ENCODE measurements at regions of chr19 and their contacts with region 1.

Region 1: GRCh38 chr19:19643158-19644053 is at the start of gene GMIP:
- DNase-seq: peak; percentile 68 to 78
- H3K4me3 ChIP-seq: peak within 1 kb of the TSS; percentile 60 to 76
- H3K27ac ChIP-seq: peak within 1 kb of the TSS; percentile 53 to 55
- H3K4me1 ChIP-seq: no peaks in the 10 kb centered on the region
- H3K27me3 ChIP-seq: no peaks in the 10 kb centered on the region
- CTCF ChIP-seq: peak; percentile 69 to 87 (median 78)
- POLR2A ChIP-seq: peak; percentile 15 to 33
- total RNA-seq, gene GMIP: 5.6 to 10.8 (median 8.2) TPM

Region 2: GRCh38 chr19:19531951-19532805 is 111.2 kb before region 1 on chr19:
- intact Hi-C with region 1: loop called (anchors 10 kb)
- DNase-seq: peak; percentile 72 to 84
- H3K4me3 ChIP-seq: no peak overlapping the region
- H3K27ac ChIP-seq: no peak overlapping the region
- H3K4me1 ChIP-seq: peaks cover 0 to 3% of the 10 kb centered on the region in 2 donors
- H3K27me3 ChIP-seq: no peaks in the 10 kb centered on the region
- CTCF ChIP-seq: peak; percentile 91 to 95 (median 92)
- POLR2A ChIP-seq: peak in 1 of 2 donors; percentile 17